ENCODE measurements at regions of chr1 and their contacts with region 1.

Region 1: GRCh38 chr1:179809506-179810366 is 66.6 kb downstream of the FAM163A start:
- DNase-seq: peak; percentile 71
- CTCF ChIP-seq: peak; percentile 91

Region 2: GRCh38 chr1:179081687-179082332 is 727.9 kb before region 1 on chr1 and contains the start of gene TOR3A:
- CTCF ChIA-PET with region 1: interaction called, 21 read pairs
- POLR2A ChIA-PET with region 1: no interaction called
- DNase-seq: peak; percentile 96
- CTCF ChIP-seq: no peak

Region 3: DNA sequence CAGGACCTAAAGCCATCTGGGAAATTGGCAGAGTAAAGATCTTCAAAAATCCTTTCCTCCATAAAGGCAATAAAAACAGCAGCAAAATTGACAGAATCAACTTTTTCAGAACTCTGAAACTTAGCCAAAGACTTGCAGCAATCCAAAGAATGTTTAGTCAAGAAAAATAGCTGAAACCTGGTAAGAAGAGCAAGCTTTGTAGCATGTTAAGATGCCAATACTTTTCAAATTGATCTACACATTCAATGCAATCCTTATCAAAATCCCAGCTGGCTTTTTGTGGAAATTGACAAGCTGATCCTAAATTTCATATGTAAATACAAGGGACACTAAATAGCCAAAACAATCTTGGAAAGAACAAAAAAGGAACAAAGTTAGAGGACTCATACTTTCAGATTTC is 90.5 kb before region 1 on chr1:
- CTCF ChIA-PET with region 1: interaction called, 10 read pairs
- POLR2A ChIA-PET with region 1: no interaction called
- DNase-seq: no peak
- CTCF ChIP-seq: no peak

Region 4: DNA sequence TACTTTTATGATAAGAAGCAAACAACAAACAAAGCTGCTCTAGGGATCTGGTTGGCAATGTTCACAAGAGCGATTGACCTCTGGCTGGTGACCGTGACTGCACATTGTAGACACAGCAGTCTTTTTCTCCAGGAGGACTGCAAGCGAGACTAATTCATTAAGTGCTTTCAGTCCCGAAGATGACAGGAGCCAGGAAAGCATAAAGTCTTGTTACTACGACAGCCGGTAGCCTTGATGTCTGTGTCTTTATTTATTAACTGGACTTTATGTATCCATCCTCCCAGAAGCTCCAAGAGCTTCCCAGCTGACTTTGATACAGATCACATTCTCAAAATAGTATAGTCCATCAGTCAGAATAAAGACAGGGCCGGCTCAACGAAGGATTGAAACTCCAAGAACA is 48.4 kb before region 1 on chr1:
- CTCF ChIA-PET with region 1: interaction called, 22 read pairs
- POLR2A ChIA-PET with region 1: no interaction called
- DNase-seq: no peak
- CTCF ChIP-seq: no peak

Region 5: GRCh38 chr1:179785031-179785431 is 24.7 kb before region 1 on chr1:
- CTCF ChIA-PET with region 1: interaction called, 208 read pairs
- POLR2A ChIA-PET with region 1: no interaction called
- DNase-seq: no peak
- CTCF ChIP-seq: no peak

Region 6: GRCh38 chr1:179831852-179832699 is 22.3 kb after region 1 on chr1:
- CTCF ChIA-PET with region 1: interaction called, 269 read pairs
- POLR2A ChIA-PET with region 1: no interaction called
- DNase-seq: no peak
- CTCF ChIP-seq: no peak

Region 7: DNA sequence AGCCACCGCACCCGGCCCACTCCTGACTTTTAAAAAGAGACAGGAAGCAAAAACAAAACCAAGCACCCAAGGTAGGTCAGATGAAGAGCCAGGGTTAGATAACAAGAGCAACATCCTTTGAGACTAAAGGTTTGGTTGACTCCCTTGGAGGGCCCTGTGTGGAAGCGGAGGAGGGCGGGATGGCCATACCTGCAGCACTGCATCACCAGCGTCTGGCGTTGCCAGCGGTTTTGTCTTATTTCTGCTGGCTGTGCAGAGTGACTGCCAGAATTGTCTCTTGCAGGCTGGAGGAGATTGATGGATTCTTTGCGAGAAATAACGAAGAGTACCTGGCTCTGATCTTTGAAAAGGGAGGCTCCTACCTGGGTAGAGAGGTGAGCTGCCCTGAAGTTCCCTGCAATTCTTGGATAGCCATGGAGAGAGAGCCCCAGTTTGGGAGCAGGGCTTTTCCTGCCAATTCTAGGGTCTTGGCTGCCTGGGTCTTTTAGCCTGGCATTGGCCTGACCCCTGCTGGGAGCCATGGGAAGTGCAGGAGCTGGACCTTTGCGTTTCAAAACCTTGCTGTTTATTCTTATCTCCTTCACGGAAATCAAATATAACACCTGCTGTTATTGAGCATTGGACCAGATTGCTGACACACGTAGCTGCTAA is 368.9 kb after region 1 on chr1:
- CTCF ChIA-PET with region 1: interaction called, 40 read pairs
- POLR2A ChIA-PET with region 1: no interaction called
- DNase-seq: peak; percentile 83
- CTCF ChIP-seq: peak; percentile 82